A549 (cell line): ENCODE measurements at regions of chrX and their contacts with region 1.

Region 1: DNA sequence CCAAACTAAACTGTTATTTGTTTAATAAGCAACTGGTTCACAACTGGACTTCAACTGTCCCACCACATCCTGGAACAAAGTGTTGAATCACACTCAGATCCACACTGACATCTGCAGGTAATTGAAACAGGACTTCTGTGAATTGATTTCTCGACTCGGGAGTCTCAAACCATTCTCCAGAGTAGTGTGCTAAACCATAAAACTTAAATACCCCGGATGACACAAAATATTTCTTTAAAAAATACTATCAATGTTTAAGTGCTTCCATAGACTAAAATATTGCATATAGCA is 95.4 kb upstream of the PLAC1 start:
- DNase-seq: peak; percentile 29 to 74
- ATAC-seq: peak; percentile 66 to 86; a peak in 4 of 6 replicates
- H3K4me3 ChIP-seq: 0 out of 3 replicates have a peak overlapping the region, but pooled peaks have one; percentile 28
- H3K27ac ChIP-seq: peak overlapping the region; percentile 65 to 80
- H3K4me1 ChIP-seq: peaks cover 24% of the 10 kb centered on the region
- CTCF ChIP-seq: peak; percentile 68
- EP300 ChIP-seq: no peak
- POLR2A ChIP-seq: no peak
- RAD21 ChIP-seq: peak; percentile 87 to 90

Region 2: DNA sequence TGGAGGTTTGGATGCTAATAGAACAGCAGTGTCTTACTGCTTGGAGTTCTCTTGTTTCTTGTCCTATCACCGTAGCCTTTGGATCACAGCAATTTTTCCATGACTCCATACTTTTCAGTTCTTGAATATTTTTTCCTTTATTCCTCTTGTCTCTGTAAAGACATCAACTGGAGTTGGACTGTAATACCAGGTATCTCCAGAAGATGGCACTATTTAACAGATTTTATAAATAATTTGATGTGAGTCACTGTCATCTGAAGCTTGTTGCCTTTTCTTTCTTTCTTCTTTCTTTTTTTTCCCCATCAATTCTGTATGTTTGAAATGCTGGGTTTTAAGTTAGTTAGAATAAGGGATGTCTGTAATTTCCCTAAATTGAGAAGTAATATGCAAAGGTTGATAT is 269.6 kb before region 1 on chrX:
- CTCF ChIA-PET with region 1: interaction called, 27 read pairs
- POLR2A ChIA-PET with region 1: no interaction called
- DNase-seq: peak; percentile 7 to 67
- ATAC-seq: peak in 1 of 2 experiments; percentile 67; a peak in 3 of 6 replicates
- H3K4me3 ChIP-seq: no peak overlapping the region
- H3K27ac ChIP-seq: peak overlapping the region; percentile 18 to 23; a peak in 2 of 6 replicates
- H3K4me1 ChIP-seq: no peaks in the 10 kb centered on the region
- CTCF ChIP-seq: peak; percentile 65
- EP300 ChIP-seq: no peak
- POLR2A ChIP-seq: no peak
- RAD21 ChIP-seq: peak; percentile 69 to 78

Region 3: GRCh38 chrX:134603806-134604700 is 149.6 kb before region 1 on chrX:
- CTCF ChIA-PET with region 1: interaction called, 14 read pairs
- POLR2A ChIA-PET with region 1: interaction called, 3 read pairs
- DNase-seq: peak; percentile 73 to 79
- ATAC-seq: peak; percentile 87 to 88
- H3K4me3 ChIP-seq: no peak overlapping the region
- H3K27ac ChIP-seq: peak overlapping the region; percentile 94 to 99
- H3K4me1 ChIP-seq: peaks cover 35% of the 10 kb centered on the region
- CTCF ChIP-seq: no peak
- EP300 ChIP-seq: peak; percentile 19 to 82; a peak in 3 of 5 replicates
- POLR2A ChIP-seq: no peak
- RAD21 ChIP-seq: peak; percentile 43 to 44

Region 4: GRCh38 chrX:134732152-134732551 is 21.5 kb before region 1 on chrX:
- CTCF ChIA-PET with region 1: interaction called, 13 read pairs
- POLR2A ChIA-PET with region 1: no interaction called
- DNase-seq: no peak
- ATAC-seq: no peak
- H3K4me3 ChIP-seq: no peak overlapping the region
- H3K27ac ChIP-seq: no peak overlapping the region
- H3K4me1 ChIP-seq: peaks cover 18% of the 10 kb centered on the region
- CTCF ChIP-seq: no peak
- EP300 ChIP-seq: no peak
- POLR2A ChIP-seq: no peak
- RAD21 ChIP-seq: no peak

Region 5: DNA sequence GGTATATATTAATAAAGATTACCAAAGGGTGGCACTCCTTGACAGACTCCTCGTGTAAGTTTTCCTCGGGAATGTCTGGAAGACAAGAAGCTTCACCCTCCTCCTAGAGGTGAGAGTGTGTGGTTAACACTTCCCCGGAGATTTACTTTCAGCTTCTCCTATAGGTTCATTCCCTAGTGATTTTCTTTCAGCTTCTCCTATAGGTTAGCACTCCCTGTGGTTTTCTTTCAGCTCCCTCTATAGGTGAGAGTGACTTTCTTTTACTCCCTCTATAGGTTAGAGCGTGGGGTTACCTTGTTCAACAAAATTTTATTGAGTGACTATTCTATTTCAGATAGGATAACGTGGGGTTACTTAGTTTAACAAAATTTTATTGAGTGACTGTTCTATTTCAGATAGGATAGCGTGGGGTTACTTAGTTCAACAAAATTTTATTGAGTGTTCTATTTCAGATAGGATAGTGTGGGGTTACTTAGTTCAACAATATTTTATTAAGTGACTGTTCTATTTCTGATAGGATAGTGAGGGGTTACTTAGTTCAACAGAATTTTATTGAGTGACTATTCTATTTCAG is 10.6 kb after region 1 on chrX:
- CTCF ChIA-PET with region 1: interaction called, 19 read pairs
- POLR2A ChIA-PET with region 1: no interaction called
- DNase-seq: peak; percentile 72 to 82
- ATAC-seq: peak; percentile 96 to 97
- H3K4me3 ChIP-seq: no peak overlapping the region
- H3K27ac ChIP-seq: no peak overlapping the region
- H3K4me1 ChIP-seq: no peaks in the 10 kb centered on the region
- CTCF ChIP-seq: peak; percentile 32; the same call in 2 of the 3 replicates
- EP300 ChIP-seq: no peak
- POLR2A ChIP-seq: no peak
- RAD21 ChIP-seq: peak in 1 of 2 experiments; percentile 29; a peak in 1 of 5 replicates

Region 6: GRCh38 chrX:134868771-134869495 is 115.3 kb after region 1 on chrX:
- CTCF ChIA-PET with region 1: no interaction called
- POLR2A ChIA-PET with region 1: no interaction called
- DNase-seq: peak in 1 of 2 experiments; percentile 12
- ATAC-seq: no peak; a peak in 1 of 6 replicates
- H3K4me3 ChIP-seq: no peak overlapping the region
- H3K27ac ChIP-seq: no peak overlapping the region
- H3K4me1 ChIP-seq: no peaks in the 10 kb centered on the region
- CTCF ChIP-seq: no peak
- EP300 ChIP-seq: no peak
- POLR2A ChIP-seq: no peak
- RAD21 ChIP-seq: no peak

Region 7: DNA sequence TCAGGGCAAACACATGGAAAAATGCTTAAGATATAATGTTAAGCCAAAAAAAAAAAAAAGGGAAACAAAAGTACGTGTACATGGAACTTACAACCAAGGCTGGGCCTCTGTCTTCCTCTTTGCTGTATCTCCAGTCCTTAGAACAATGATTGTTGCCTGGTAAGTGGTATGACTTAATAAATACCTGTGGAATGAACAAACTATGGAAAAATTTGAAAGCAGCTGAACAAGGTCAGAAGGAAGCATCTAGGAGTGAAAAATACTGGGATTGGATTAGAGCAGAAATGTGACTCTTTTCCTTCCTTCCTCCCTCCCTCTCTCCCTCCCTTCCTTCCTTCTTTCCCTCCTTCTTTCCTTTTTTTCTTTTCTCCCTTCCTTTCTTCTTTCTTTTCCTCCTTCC is 182.9 kb after region 1 on chrX:
- CTCF ChIA-PET with region 1: no interaction called
- POLR2A ChIA-PET with region 1: no interaction called
- DNase-seq: peak in 1 of 2 experiments; percentile 29
- ATAC-seq: peak in 1 of 2 experiments; percentile 38; a peak in 2 of 6 replicates
- H3K4me3 ChIP-seq: no peak overlapping the region
- H3K27ac ChIP-seq: peak overlapping the region; percentile 14 to 50; a peak in 3 of 6 replicates
- H3K4me1 ChIP-seq: peaks cover 27% of the 10 kb centered on the region; the same call in 2 of the 3 replicates
- CTCF ChIP-seq: no peak
- EP300 ChIP-seq: no peak
- POLR2A ChIP-seq: no peak
- RAD21 ChIP-seq: no peak